ENCODE measurements at regions of chr11 and their contacts with region 1.

Region 1: DNA sequence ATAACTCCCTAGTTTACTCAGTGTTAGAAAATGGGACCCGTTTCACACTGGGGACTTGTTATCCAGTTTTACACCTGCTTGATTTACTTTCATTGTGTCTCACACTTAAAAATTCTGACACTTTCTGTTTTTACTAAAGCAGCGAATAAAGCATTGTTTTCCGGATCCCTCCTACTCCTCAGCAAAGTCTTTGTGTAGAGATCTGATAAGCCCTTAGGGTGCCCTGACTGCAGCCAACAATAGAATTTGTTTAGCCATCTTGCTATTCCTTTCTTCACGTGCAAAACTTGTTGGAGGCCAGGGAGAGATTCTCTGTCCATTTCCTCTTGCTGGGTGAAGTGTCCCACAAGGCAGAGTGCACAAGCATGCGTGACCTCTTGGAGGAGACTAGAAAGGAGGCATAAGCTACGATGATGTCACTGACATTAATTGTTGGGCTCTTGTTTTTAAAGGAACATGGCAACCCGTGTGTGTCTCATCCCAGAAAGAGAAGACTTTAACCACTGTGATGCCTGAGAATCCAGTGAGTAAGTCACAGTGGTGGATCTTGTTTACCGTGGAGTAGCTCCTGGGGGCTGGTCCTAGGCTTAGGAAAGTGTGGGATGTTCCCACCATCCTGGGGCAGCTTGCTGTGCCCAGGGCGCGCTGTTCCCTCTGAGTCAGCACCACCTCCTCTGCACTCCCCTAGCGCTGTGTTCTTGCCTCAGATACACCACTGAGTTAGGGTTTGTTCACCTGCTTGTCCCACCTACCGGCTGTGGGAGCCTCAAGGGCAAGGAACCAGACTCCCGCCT is 27.7 kb downstream of the MICAL2 start:
- DNase-seq: no peak
- H3K4me3 Mint-ChIP-seq: no peak overlapping the region
- H3K27ac Mint-ChIP-seq: peak overlapping the region; percentile 55
- H3K4me1 Mint-ChIP-seq: peaks cover 66% of the 10 kb centered on the region
- H3K27me3 Mint-ChIP-seq: no peaks in the 10 kb centered on the region

Region 2: DNA sequence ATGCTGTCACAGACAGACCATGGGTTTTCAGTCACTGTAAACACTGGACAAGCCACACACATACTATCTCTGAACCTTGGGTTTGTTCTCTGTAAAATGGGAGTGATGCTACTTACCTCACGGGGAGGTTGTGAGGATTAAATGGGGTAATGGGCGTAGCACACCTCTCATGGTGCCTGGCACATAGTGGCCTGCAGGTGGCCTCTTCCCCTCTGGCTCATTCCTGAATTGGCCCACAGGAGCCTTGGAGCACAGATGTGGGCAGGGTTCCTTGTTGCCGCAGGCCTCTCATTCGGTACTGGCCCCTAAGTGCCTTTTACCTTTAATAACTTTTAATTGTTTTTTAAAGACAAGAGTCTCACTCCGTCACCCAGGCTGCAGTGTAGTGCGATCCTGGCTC is 16.1 kb before region 1 on chr11:
- CTCF ChIA-PET with region 1: interaction called, 51 read pairs
- POLR2A ChIA-PET with region 1: interaction called, 5 read pairs
- DNase-seq: no peak
- H3K4me3 Mint-ChIP-seq: no peak overlapping the region
- H3K27ac Mint-ChIP-seq: no peak overlapping the region
- H3K4me1 Mint-ChIP-seq: peaks cover 76% of the 10 kb centered on the region
- H3K27me3 Mint-ChIP-seq: no peaks in the 10 kb centered on the region

Region 3: GRCh38 chr11:12150831-12151382 is 12.8 kb after region 1 on chr11:
- CTCF ChIA-PET with region 1: interaction called, 17 read pairs
- POLR2A ChIA-PET with region 1: no interaction called
- DNase-seq: no peak
- H3K4me3 Mint-ChIP-seq: no peak overlapping the region
- H3K27ac Mint-ChIP-seq: peak overlapping the region; percentile 90
- H3K4me1 Mint-ChIP-seq: peaks cover 65% of the 10 kb centered on the region
- H3K27me3 Mint-ChIP-seq: no peaks in the 10 kb centered on the region

Region 4: GRCh38 chr11:12235947-12236743 is 98.0 kb after region 1 on chr11:
- CTCF ChIA-PET with region 1: interaction called, 11 read pairs
- POLR2A ChIA-PET with region 1: no interaction called
- DNase-seq: peak; percentile 75
- H3K4me3 Mint-ChIP-seq: peak overlapping the region; percentile 56
- H3K27ac Mint-ChIP-seq: peak overlapping the region; percentile 95
- H3K4me1 Mint-ChIP-seq: peaks cover 38% of the 10 kb centered on the region
- H3K27me3 Mint-ChIP-seq: no peaks in the 10 kb centered on the region